HepG2 (cell line): ENCODE measurements at regions of chr12 and their contacts with region 1.

Region 1: DNA sequence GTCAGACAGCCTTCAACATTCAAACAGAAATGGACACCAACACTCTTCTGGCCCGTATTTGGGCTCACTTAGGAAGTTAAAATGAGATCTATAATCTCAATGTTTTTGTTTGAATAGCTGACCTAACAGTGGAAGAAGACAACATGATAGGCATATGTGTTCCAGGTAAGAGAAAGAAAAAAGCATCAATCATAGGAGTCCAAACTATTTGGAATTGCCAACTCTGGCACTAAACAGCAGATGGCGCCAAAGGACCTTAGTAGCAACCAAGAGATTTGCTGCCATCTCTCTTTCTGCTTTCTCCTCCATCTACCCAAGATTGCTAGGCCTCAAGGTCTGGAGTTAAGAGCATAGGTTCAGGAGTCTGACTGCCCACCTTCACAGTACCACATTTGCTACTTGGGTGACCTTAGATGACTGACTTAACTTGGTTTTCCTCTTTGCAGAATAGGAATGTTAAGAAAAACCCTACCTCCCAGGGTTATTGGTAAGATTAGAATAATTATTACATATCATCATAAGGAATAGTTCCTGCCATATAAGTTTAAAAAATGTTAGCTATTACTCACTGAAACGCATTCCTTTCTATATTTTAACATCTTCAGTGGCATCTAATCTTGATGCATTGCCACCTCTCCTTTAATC is 30.2 kb downstream of the PEX5 start:
- DNase-seq: peak; percentile 63
- ATAC-seq: peak; percentile 58
- H3K4me3 ChIP-seq: no peak overlapping the region
- H3K27ac ChIP-seq: no peak overlapping the region
- H3K4me1 ChIP-seq: no peaks in the 10 kb centered on the region
- H3K27me3 ChIP-seq: no peaks in the 10 kb centered on the region
- CTCF ChIP-seq: peak; percentile 91
- EP300 ChIP-seq: no peak
- POLR2A ChIP-seq: no peak
- RAD21 ChIP-seq: peak; percentile 82

Region 2: GRCh38 chr12:7229741-7230140 is 10.0 kb after region 1 on chr12:
- CTCF ChIA-PET with region 1: no interaction called
- POLR2A ChIA-PET with region 1: no interaction called
- in situ Hi-C with region 1: no loop called
- intact Hi-C with region 1: no loop called
- DNase-seq: no peak
- ATAC-seq: no peak
- H3K4me3 ChIP-seq: no peak overlapping the region
- H3K27ac ChIP-seq: no peak overlapping the region
- H3K4me1 ChIP-seq: no peaks in the 10 kb centered on the region
- H3K27me3 ChIP-seq: no peaks in the 10 kb centered on the region; a peak in 1 of 5 replicates
- CTCF ChIP-seq: no peak
- EP300 ChIP-seq: no peak
- POLR2A ChIP-seq: no peak
- RAD21 ChIP-seq: no peak

Region 3: DNA sequence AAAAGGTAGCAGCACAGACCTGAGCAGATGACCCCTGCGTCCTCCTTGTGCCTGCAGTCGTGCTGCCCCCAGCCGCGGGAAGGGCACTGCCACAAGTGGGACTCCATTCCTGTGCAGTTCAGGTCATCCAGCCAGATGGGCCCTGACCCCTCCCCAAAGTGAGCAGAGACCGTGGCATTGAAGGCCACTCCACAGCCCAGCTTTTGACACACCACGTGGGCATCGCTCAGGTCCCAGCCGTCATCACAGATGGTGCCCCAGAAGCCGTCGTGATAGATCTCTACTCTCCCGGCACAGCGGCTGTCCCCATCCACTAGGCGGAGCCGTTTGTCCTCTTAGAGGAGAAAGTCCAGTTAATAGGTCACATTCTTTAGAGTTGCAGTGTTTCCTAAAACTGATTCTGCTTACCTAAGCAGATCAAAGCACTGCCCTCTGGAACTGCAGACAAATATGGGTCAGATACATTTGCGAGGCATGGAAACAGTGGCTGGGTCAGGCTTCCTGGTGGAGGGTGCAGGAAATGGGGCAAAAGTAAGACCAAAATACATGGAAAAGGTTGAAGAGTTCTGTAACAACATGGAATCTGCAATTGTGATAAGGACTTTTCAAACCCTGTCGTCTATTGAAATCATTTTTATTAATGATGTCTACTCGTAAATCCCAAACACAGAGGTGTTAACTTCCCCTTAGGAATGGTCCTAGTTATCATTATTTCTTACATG is 154.9 kb after region 1 on chr12:
- CTCF ChIA-PET with region 1: no interaction called
- POLR2A ChIA-PET with region 1: no interaction called
- in situ Hi-C with region 1: loop called (anchors 10 kb)
- intact Hi-C with region 1: loop called (anchors 5 kb)
- DNase-seq: peak; percentile 80
- ATAC-seq: peak; percentile 99
- H3K4me3 ChIP-seq: no peak overlapping the region
- H3K27ac ChIP-seq: no peak overlapping the region
- H3K4me1 ChIP-seq: peaks cover 13% of the 10 kb centered on the region
- H3K27me3 ChIP-seq: no peaks in the 10 kb centered on the region; a peak in 1 of 5 replicates
- CTCF ChIP-seq: peak; percentile 93
- EP300 ChIP-seq: no peak
- POLR2A ChIP-seq: no peak
- RAD21 ChIP-seq: peak; percentile 62

Region 4: GRCh38 chr12:7439579-7440505 is 220.1 kb after region 1 on chr12:
- CTCF ChIA-PET with region 1: no interaction called
- POLR2A ChIA-PET with region 1: no interaction called
- in situ Hi-C with region 1: no loop called
- intact Hi-C with region 1: no loop called
- DNase-seq: no peak
- ATAC-seq: no peak
- H3K4me3 ChIP-seq: no peak overlapping the region
- H3K27ac ChIP-seq: no peak overlapping the region
- H3K4me1 ChIP-seq: no peaks in the 10 kb centered on the region
- H3K27me3 ChIP-seq: no peaks in the 10 kb centered on the region; a peak in 1 of 5 replicates
- CTCF ChIP-seq: no peak
- EP300 ChIP-seq: no peak
- POLR2A ChIP-seq: no peak
- RAD21 ChIP-seq: no peak

Region 5: GRCh38 chr12:7450665-7451064 is 230.9 kb after region 1 on chr12:
- CTCF ChIA-PET with region 1: no interaction called
- POLR2A ChIA-PET with region 1: no interaction called
- in situ Hi-C with region 1: loop called (anchors 5 kb)
- intact Hi-C with region 1: no loop called
- DNase-seq: peak; percentile 46
- ATAC-seq: no peak
- H3K4me3 ChIP-seq: no peak overlapping the region
- H3K27ac ChIP-seq: no peak overlapping the region
- H3K4me1 ChIP-seq: no peaks in the 10 kb centered on the region
- H3K27me3 ChIP-seq: no peaks in the 10 kb centered on the region
- CTCF ChIP-seq: no peak
- EP300 ChIP-seq: no peak
- POLR2A ChIP-seq: no peak
- RAD21 ChIP-seq: no peak

Region 6: GRCh38 chr12:7460375-7461259 is 240.9 kb after region 1 on chr12:
- CTCF ChIA-PET with region 1: interaction called, 49 read pairs
- POLR2A ChIA-PET with region 1: no interaction called
- in situ Hi-C with region 1: no loop called
- intact Hi-C with region 1: loop called (anchors 1 kb)
- DNase-seq: peak; percentile 46
- ATAC-seq: peak; percentile 91
- H3K4me3 ChIP-seq: no peak overlapping the region
- H3K27ac ChIP-seq: no peak overlapping the region
- H3K4me1 ChIP-seq: no peaks in the 10 kb centered on the region
- H3K27me3 ChIP-seq: no peaks in the 10 kb centered on the region
- CTCF ChIP-seq: peak; percentile 86
- EP300 ChIP-seq: no peak
- POLR2A ChIP-seq: no peak
- RAD21 ChIP-seq: peak; percentile 69

Region 7: GRCh38 chr12:7638760-7639555 is 419.2 kb after region 1 on chr12:
- CTCF ChIA-PET with region 1: interaction called, 27 read pairs
- POLR2A ChIA-PET with region 1: no interaction called
- in situ Hi-C with region 1: loop called (anchors 10 kb)
- intact Hi-C with region 1: loop called (anchors 1 kb)
- DNase-seq: peak; percentile 73
- ATAC-seq: peak; percentile 93
- H3K4me3 ChIP-seq: no peak overlapping the region
- H3K27ac ChIP-seq: no peak overlapping the region
- H3K4me1 ChIP-seq: peaks cover 26% of the 10 kb centered on the region
- H3K27me3 ChIP-seq: peaks cover 0 to 8% of the 10 kb centered on the region in 2 experiments; a peak in 2 of 5 replicates
- CTCF ChIP-seq: peak; percentile 88
- EP300 ChIP-seq: no peak
- POLR2A ChIP-seq: no peak
- RAD21 ChIP-seq: peak; percentile 85